ENCODE measurements at regions of chr17 and their contacts with region 1.

Region 1: DNA sequence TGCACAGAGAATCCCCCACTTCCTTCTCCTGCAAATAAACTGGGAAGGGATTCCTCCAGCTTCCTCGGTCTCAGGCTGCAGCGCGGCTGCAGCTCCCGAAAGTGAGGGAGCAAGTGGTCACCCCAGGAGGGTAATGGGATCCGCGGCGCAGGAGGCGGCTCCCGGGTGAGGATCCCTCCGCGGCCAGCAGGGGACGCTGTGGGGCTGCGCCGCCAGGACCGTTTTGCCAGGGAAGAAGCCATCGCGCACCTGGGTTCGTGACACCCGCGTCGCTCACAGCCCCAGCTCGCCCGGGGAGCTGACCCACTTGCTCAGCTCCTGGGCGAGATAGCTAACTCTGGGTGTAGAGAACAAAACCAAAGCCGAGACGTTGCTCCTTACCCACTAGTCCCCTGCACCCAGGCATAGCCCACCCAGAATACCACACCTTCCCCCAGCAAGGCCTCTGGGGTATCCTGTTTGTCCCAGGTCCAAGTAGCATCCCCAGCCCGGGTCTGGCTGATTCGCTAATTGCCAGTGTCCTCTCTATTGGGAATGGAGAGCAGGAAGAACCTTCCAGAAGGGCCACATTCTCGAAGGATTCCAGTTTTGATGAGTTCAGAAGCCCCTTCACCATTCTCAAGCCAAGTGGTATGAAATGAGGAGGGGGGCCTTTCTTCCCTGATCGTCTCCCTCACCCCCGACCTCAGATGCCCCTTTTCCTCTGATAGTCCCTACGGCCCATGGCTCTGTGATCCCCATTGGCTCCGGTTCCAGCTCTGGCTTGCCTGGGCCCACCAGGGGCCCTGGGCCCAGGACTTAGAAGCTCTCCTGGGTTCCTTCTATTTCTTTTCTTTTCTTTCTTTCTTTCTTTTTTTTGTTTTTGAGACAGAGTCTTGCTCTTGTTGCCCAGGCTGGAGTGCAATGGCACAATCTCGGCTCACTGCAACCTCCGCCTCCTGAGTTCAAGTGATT is 14.1 kb downstream of the CYGB start:
- DNase-seq: peak; percentile 67 to 78 (median 72)
- ATAC-seq: peak; percentile 82
- H3K4me3 ChIP-seq: no peak overlapping the region
- H3K27ac ChIP-seq: no peak overlapping the region
- H3K4me1 ChIP-seq: peaks cover 23% of the 10 kb centered on the region
- H3K27me3 ChIP-seq: peaks cover 0 to 4% of the 10 kb centered on the region in 2 donors
- CTCF ChIP-seq: peak; percentile 96 to 99 (median 98)
- POLR2A ChIP-seq: no peak

Region 2: DNA sequence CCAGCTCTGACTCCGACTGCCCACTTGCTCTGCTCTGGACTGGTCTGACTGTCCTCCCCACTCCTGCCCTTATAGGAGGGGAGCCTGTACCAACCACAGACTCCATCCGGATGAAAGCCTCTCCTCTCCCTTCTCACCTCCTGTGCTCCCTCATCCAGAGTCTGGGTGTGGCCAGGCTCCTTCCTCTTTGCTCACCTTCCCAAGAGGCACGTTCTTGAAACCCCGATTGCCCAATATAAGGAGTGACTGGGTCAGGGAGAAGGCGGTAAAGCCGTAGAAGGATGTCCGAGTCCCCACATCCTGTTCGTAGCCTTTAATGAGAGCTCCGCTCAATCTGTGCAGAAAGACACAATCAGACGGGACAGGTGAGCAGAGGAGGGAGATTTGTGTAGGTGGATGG is 103.1 kb after region 1 on chr17:
- intact Hi-C with region 1: loop called (anchors 5 kb)
- DNase-seq: no peak
- ATAC-seq: no peak
- H3K4me3 ChIP-seq: no peak overlapping the region
- H3K27ac ChIP-seq: no peak overlapping the region
- H3K4me1 ChIP-seq: peaks cover 3% of the 10 kb centered on the region
- H3K27me3 ChIP-seq: no peaks in the 10 kb centered on the region
- CTCF ChIP-seq: no peak
- POLR2A ChIP-seq: no peak

Region 3: DNA sequence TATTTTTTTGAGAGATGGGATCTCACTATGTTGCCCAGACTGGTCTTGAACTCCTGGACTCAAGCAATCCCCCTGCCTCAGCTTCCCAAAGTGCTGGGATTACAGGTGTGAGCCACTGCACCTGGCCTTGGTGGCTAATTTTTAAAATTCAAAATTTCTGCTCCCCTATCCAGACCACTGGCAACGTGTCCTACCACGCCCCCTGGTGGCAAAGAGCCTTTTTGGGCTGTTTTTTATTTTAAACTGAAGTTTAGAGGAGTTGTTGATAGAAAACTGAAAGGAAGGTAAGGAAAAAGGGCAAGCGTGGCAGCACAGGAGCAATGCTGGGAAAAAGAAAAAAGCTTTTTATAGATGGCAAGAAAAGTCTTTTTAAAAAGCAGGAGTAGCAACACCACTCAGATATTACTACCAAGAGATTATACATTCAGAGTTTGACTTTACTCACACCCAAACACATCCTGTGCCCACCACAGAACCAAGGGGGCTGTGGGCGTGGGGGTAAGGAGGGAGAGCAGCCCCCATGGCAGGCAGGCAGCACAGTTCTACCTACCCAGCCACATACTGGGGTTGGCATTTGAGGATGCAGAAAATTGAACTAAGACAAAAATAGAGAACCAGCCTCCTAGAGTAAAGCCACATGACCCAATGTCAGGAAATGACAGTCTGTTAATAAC is 191.6 kb after region 1 on chr17:
- intact Hi-C with region 1: loop called (anchors 10 kb)
- DNase-seq: peak; percentile 59 to 80 (median 70)
- ATAC-seq: no peak
- H3K4me3 ChIP-seq: no peak overlapping the region
- H3K27ac ChIP-seq: peak overlapping the region in 2 of 4 donors; percentile 7 to 60
- H3K4me1 ChIP-seq: peaks cover 25% of the 10 kb centered on the region
- H3K27me3 ChIP-seq: no peaks in the 10 kb centered on the region
- CTCF ChIP-seq: peak; percentile 60 to 90 (median 70)
- POLR2A ChIP-seq: no peak